Adrenal gland (tissue), 19 donors: ENCODE measurements at regions of chr22 and their contacts with region 1.

Region 1: GRCh38 chr22:30079952-30080533 is at the start of gene HORMAD2:
- DNase-seq: peak in 1 of 7 donors; percentile 7
- H3K4me3 ChIP-seq: peak within 1 kb of the TSS in 1 of 4 donors; percentile 9
- H3K27ac ChIP-seq: no peak within 1 kb of the TSS
- H3K4me1 ChIP-seq: no peaks in the 10 kb centered on the region
- H3K27me3 ChIP-seq: peaks cover 4% of the 10 kb centered on the region
- CTCF ChIP-seq: no peak
- POLR2A ChIP-seq: no peak
- total RNA-seq, gene HORMAD2: not detected

Region 2: GRCh38 chr22:29635734-29636357 is 444.2 kb before region 1 on chr22:
- intact Hi-C with region 1: loop called in 1 of 2 experiments (anchors 10 kb)
- DNase-seq: peak in 1 of 7 donors; percentile 13
- H3K4me3 ChIP-seq: no peak overlapping the region
- H3K27ac ChIP-seq: no peak overlapping the region
- H3K4me1 ChIP-seq: peaks cover 0 to 29% of the 10 kb centered on the region in 2 donors
- H3K27me3 ChIP-seq: no peaks in the 10 kb centered on the region
- CTCF ChIP-seq: peak; percentile 40 to 68 (median 63)
- POLR2A ChIP-seq: no peak

Region 3: GRCh38 chr22:30196141-30196879 is 116.3 kb after region 1 on chr22:
- intact Hi-C with region 1: no loop called
- DNase-seq: peak; percentile 33 to 88 (median 63)
- H3K4me3 ChIP-seq: peak overlapping the region in 1 of 4 donors; percentile 9
- H3K27ac ChIP-seq: peak overlapping the region in 4 of 5 donors; percentile 31 to 81 (median 53)
- H3K4me1 ChIP-seq: peaks cover 4 to 9% of the 10 kb centered on the region in 2 donors
- H3K27me3 ChIP-seq: no peaks in the 10 kb centered on the region
- CTCF ChIP-seq: no peak
- POLR2A ChIP-seq: no peak